Natural killer cell (primary cell): ENCODE measurements at regions of chr4 and their contacts with region 1.

Region 1: DNA sequence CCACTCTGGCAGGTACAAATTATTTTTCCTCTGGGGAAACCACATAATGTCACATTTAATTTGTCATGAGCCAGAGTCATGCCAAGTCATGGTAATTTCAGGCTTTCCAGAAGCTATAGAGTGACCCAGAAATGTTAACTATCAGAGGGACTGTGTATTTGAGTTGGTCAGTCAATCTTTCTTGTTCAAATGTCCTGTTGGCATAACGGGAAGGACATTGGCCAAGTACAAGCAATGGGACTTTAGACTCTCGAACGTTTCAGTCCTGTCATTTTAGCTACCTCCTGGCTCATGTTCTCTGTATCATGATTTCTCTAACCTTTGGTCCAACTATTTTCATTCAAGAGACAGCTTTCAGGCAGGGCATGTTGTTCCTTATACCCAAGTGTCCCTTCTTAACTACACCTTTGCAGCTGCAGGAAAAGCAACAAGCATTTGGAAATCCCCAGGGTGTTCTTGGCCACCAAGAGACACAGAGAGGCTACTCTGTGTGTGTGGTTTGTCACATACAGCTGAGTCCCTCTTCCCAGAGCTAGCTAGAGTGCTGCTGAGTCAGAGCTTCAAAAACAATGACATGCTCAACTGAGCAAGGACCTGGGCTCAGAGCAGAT is 142.6 kb downstream of the EGF start:
- DNase-seq: peak in 1 of 2 donors; percentile 28
- ATAC-seq: peak; percentile 79 to 86 (median 79)
- H3K4me3 ChIP-seq: no peak overlapping the region
- H3K4me3 Mint-ChIP-seq: peak overlapping the region; percentile 67
- H3K27ac ChIP-seq: peak overlapping the region; percentile 37
- H3K27ac Mint-ChIP-seq: peak overlapping the region; percentile 83 to 92
- H3K4me1 ChIP-seq: peaks cover 20% of the 10 kb centered on the region
- H3K4me1 Mint-ChIP-seq: peaks cover 66 to 69% of the 10 kb centered on the region in 2 donors
- H3K27me3 ChIP-seq: no peaks in the 10 kb centered on the region
- H3K27me3 Mint-ChIP-seq: no peaks in the 10 kb centered on the region
- CTCF ChIP-seq: no peak

Region 2: DNA sequence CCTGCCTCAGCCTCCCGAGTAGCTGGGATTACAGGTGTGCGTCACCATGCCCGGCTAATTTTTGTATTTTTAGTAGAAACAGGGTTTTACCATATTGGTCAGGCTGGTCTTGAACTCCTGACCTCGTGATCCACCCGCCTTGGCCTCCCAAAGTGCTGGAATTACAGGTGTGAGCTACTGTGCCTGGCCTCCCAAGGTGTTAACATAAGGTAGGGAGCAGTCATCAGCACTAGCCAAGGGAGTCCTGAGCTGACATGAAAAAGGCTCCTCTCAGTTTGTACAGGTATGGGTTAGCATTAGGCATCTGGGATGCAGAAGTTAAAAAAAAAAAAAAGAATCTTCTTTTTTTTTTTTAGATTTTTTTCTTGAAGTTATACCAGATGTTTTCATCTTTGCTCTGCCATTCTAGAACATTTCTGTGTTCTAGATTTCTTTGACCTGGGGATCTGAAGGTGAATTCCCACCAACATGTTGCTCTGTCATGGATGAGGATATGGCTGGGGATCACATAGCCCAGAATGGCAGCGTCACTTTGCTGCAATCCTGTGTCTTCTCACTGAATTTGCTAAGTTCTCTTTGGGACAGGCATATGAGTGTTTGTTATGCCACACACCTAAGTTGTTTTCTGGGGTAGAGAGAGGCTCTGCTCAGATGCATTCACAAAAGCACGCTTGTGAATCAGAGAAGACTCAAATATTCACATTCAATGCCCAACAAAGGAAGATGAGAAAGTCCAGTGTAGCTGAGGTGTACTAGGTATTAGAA is 301.0 kb before region 1 on chr4:
- intact Hi-C with region 1: no loop called
- DNase-seq: no peak
- ATAC-seq: peak; percentile 43 to 57 (median 46)
- H3K4me3 ChIP-seq: no peak overlapping the region
- H3K4me3 Mint-ChIP-seq: no peak overlapping the region
- H3K27ac ChIP-seq: no peak overlapping the region
- H3K27ac Mint-ChIP-seq: no peak overlapping the region
- H3K4me1 ChIP-seq: no peaks in the 10 kb centered on the region
- H3K4me1 Mint-ChIP-seq: no peaks in the 10 kb centered on the region
- H3K27me3 ChIP-seq: no peaks in the 10 kb centered on the region
- H3K27me3 Mint-ChIP-seq: peaks cover 4 to 8% of the 10 kb centered on the region in 2 donors
- CTCF ChIP-seq: no peak

Region 3: DNA sequence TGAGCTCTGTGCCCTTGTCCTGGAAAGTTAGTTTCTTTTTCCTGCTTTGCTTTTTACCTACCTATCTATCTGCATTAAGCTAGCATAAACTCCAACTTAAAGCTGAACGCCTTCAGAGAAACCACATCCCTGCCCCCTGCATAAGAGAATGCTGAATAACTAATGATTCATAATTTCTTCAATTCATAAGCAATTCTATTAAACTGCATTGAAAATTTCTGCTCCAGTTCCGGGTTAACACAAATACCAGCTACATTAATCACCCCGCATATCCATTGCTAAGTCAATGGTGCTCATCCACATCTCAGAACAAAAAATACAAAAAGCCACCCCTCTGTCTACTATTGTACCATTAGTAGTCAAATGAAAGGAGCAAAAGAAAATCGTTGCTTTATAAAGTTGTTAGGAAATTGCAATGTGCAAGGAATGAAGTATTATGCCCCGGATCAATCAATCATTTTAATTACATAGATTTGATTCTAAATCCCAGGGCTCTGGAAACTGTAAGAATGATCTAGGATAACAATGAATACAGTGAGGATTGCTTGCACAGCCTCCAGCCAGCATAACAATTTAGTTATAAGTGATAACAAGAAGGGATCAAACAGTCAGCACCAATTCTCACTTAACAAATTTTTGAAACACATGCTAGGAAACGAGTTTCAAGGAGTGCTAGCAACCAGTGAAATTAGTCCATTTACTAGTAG is 36.3 kb after region 1 on chr4:
- intact Hi-C with region 1: loop called (anchors 5 kb)
- DNase-seq: no peak
- ATAC-seq: no peak
- H3K4me3 ChIP-seq: no peak overlapping the region
- H3K4me3 Mint-ChIP-seq: no peak overlapping the region
- H3K27ac ChIP-seq: no peak overlapping the region
- H3K27ac Mint-ChIP-seq: no peak overlapping the region
- H3K4me1 ChIP-seq: no peaks in the 10 kb centered on the region
- H3K4me1 Mint-ChIP-seq: peaks cover 37 to 44% of the 10 kb centered on the region in 2 donors
- H3K27me3 ChIP-seq: no peaks in the 10 kb centered on the region
- H3K27me3 Mint-ChIP-seq: no peaks in the 10 kb centered on the region
- CTCF ChIP-seq: no peak

Region 4: GRCh38 chr4:110155654-110156053 is 100.4 kb after region 1 on chr4:
- intact Hi-C with region 1: loop called (anchors 5 kb)
- DNase-seq: no peak
- ATAC-seq: no peak
- H3K4me3 ChIP-seq: no peak overlapping the region
- H3K4me3 Mint-ChIP-seq: peak overlapping the region; percentile 50
- H3K27ac ChIP-seq: no peak overlapping the region
- H3K27ac Mint-ChIP-seq: peak overlapping the region; percentile 67 to 70
- H3K4me1 ChIP-seq: peaks cover 6% of the 10 kb centered on the region
- H3K4me1 Mint-ChIP-seq: peaks cover 34 to 38% of the 10 kb centered on the region in 2 donors
- H3K27me3 ChIP-seq: no peaks in the 10 kb centered on the region
- H3K27me3 Mint-ChIP-seq: no peaks in the 10 kb centered on the region
- CTCF ChIP-seq: no peak

Region 5: GRCh38 chr4:110165382-110166285 is 110.4 kb after region 1 on chr4:
- intact Hi-C with region 1: loop called (anchors 5 kb)
- DNase-seq: peak; percentile 36 to 80
- ATAC-seq: peak; percentile 94 to 99 (median 99)
- H3K4me3 ChIP-seq: no peak overlapping the region
- H3K4me3 Mint-ChIP-seq: peak overlapping the region; percentile 79
- H3K27ac ChIP-seq: peak overlapping the region; percentile 81
- H3K27ac Mint-ChIP-seq: peak overlapping the region; percentile 84 to 92
- H3K4me1 ChIP-seq: peaks cover 28% of the 10 kb centered on the region
- H3K4me1 Mint-ChIP-seq: peaks cover 41 to 42% of the 10 kb centered on the region in 2 donors
- H3K27me3 ChIP-seq: no peaks in the 10 kb centered on the region
- H3K27me3 Mint-ChIP-seq: no peaks in the 10 kb centered on the region
- CTCF ChIP-seq: no peak

Region 6: GRCh38 chr4:110193822-110194761 is 138.8 kb after region 1 on chr4:
- intact Hi-C with region 1: loop called (anchors 1 kb)
- DNase-seq: peak; percentile 62 to 89
- ATAC-seq: peak; percentile 72 to 83 (median 75)
- H3K4me3 ChIP-seq: no peak overlapping the region
- H3K4me3 Mint-ChIP-seq: peak overlapping the region; percentile 57
- H3K27ac ChIP-seq: peak overlapping the region; percentile 72
- H3K27ac Mint-ChIP-seq: peak overlapping the region; percentile 80 to 91
- H3K4me1 ChIP-seq: peaks cover 19% of the 10 kb centered on the region
- H3K4me1 Mint-ChIP-seq: peaks cover 36 to 47% of the 10 kb centered on the region in 2 donors
- H3K27me3 ChIP-seq: no peaks in the 10 kb centered on the region
- H3K27me3 Mint-ChIP-seq: no peaks in the 10 kb centered on the region
- CTCF ChIP-seq: no peak